ENCODE measurements at regions of chr18 and their contacts with region 1.

Region 1: GRCh38 chr18:21704603-21705364 is at the start of gene ABHD3:
- DNase-seq: peak; percentile 96 to 98 (median 98)
- ATAC-seq: peak; percentile 100
- H3K4me3 ChIP-seq: peak within 1 kb of the TSS; percentile 89
- H3K27ac ChIP-seq: peak within 1 kb of the TSS; percentile 89
- H3K4me1 ChIP-seq: no peaks in the 10 kb centered on the region
- H3K27me3 ChIP-seq: no peaks in the 10 kb centered on the region
- total RNA-seq, gene ABHD3: 4.0 to 6.9 (median 5.4) TPM

Region 2: DNA sequence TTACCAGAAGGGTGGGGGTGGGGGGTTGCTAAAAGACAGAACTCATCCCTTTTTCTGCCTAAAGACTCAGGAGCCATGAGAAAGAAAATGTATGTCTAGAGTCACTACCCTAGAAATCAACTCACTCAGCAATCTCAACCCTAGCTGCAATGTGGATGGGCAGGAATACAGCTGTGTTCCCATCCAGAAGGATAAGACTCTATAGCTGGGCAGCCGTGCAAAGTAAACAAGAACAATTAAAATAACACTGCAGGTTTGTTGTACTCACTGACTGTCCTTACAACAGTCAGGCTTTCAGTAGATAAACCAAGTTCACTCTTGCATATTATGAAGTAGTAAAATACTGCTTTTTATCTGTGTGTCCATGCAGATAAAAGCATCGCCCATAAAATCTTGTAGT is 178.3 kb before region 1 on chr18:
- intact Hi-C with region 1: no loop called
- DNase-seq: no peak
- ATAC-seq: peak; percentile 34 to 65
- H3K4me3 ChIP-seq: no peak overlapping the region
- H3K27ac ChIP-seq: no peak overlapping the region
- H3K4me1 ChIP-seq: no peaks in the 10 kb centered on the region
- H3K27me3 ChIP-seq: no peaks in the 10 kb centered on the region

Region 3: DNA sequence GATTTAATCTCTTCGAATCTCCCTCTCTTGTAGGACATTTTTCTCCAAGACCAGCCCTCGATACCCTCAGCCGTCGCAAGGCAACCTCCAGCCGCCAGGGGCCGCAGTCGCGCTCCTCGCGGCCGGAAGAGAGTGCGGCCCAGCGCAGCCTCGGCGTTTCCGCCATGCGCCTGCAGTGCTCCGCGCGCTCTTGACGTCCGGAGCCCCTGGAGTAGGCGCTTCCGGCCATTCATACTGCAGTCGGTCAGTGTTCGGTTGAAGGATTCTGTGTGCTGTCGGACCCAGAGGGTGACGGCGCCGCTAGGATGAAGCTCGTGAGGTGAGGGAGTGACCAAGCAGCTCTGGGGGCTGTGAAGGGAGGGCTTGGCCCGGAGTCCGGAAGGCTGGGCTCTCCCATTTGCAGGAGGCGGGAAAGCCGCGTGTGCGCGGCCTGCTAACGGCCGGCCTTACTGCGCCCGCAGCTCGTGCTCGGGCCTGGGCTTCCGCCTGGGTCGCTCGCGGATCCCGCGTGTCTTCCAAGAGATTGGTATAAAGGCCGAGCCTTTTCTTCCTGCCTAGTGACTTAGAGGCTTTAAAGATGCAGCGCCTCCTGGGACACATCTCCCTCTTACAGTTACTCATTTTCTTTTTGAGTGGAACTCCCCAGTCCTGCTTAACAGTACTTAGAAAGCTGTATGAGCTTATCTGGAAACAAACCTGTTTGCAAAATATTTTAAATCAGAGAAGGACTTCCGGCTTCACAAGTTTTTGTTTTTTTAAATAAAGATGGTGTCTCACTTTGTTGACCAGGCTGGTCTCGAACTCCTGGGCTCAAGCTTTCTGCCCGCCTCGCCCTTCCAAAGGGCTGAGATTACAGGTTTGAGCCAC is 92.4 kb before region 1 on chr18 and contains the start of gene SNRPD1:
- intact Hi-C with region 1: loop called in 1 of 4 experiments (anchors 5 kb)
- DNase-seq: peak; percentile 90 to 96 (median 95)
- ATAC-seq: peak; percentile 99
- H3K4me3 ChIP-seq: peak within 1 kb of the TSS; percentile 62
- H3K27ac ChIP-seq: peak within 1 kb of the TSS; percentile 6
- H3K4me1 ChIP-seq: no peaks in the 10 kb centered on the region
- H3K27me3 ChIP-seq: no peaks in the 10 kb centered on the region
- total RNA-seq, gene SNRPD1: 17.1 to 29.9 (median 25.4) TPM